Adrenal gland (tissue), 19 donors: ENCODE measurements at regions of chr6 and their contacts with region 1.

Region 1: DNA sequence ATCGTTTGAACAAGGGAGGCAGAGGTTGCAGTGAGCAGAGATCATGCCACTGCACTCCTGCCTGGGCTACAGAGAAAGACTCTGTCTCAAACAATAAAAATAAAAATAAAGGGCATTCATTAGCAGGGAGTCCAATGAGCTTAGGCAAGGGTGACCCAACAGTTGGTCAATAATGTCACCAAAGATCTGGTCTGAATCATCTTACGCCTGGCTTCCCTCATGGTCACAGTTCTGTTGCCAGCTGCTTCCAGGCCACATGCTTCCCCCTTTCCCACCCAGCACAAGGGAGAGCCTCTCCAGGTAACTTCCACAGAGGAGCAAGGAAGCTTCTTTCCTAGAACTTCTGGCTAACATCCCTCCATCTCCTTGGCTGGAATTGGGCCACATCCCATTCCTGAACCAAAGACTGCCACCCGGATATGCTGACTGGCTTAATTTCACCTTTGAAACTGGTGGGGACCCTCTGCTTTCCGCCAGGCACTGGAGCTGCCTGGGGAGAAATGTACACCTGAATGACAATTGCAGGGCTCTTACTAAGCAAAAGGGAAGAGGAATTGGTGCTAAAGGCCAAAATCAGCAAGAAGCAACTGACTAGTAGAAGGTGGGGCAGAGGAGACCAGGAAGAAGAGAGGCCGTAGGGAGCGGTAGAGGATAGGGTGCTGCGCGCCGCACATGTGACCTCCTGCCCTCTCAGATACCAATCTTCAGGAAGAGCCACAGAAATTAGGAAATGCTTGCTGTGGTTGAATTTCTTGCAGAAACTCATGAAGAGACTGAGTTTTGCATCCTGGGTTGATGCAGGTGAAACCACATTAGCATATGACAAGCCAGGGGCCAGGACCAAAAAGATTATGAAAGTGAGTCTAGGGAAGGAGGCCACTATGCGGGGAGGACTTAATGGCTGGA is 8.3 kb upstream of the SCML4 start:
- DNase-seq: no peak
- H3K4me3 ChIP-seq: no peak overlapping the region
- H3K27ac ChIP-seq: no peak overlapping the region
- H3K4me1 ChIP-seq: no peaks in the 10 kb centered on the region
- H3K27me3 ChIP-seq: no peaks in the 10 kb centered on the region
- CTCF ChIP-seq: no peak
- POLR2A ChIP-seq: no peak

Region 2: GRCh38 chr6:107689951-107690642 is 142.3 kb before region 1 on chr6:
- intact Hi-C with region 1: loop called in 1 of 2 experiments (anchors 10 kb)
- DNase-seq: peak in 1 of 7 donors; percentile 35
- H3K4me3 ChIP-seq: no peak overlapping the region
- H3K27ac ChIP-seq: no peak overlapping the region
- H3K4me1 ChIP-seq: peaks cover 0 to 15% of the 10 kb centered on the region in 2 donors
- H3K27me3 ChIP-seq: no peaks in the 10 kb centered on the region
- CTCF ChIP-seq: no peak
- POLR2A ChIP-seq: no peak